Ascending aorta (tissue), 2 donors: ENCODE measurements at regions of chrX and their contacts with region 1.

Region 1: GRCh38 chrX:140928739-140929138 is 73.7 kb upstream of the SPANXB1 start:
- DNase-seq: no peak
- H3K4me3 ChIP-seq: no peak overlapping the region
- H3K27ac ChIP-seq: no peak overlapping the region
- H3K4me1 ChIP-seq: no peaks in the 10 kb centered on the region
- H3K27me3 ChIP-seq: no peaks in the 10 kb centered on the region
- CTCF ChIP-seq: no peak

Region 2: GRCh38 chrX:141176586-141177451 is 248.1 kb after region 1 on chrX and contains the start of gene LDOC1:
- intact Hi-C with region 1: loop called (anchors 10 kb)
- DNase-seq: peak; percentile 16 to 89
- H3K4me3 ChIP-seq: peak within 1 kb of the TSS; percentile 58 to 81
- H3K27ac ChIP-seq: peak within 1 kb of the TSS; percentile 81 to 88
- H3K4me1 ChIP-seq: no peaks in the 10 kb centered on the region
- H3K27me3 ChIP-seq: no peaks in the 10 kb centered on the region
- CTCF ChIP-seq: no peak
- total RNA-seq, gene LDOC1: 21.9 TPM